Colonic mucosa (tissue), 4 donors: ENCODE measurements at regions of chr2 and their contacts with region 1.

Region 1: GRCh38 chr2:207625018-207625907 is at the start of gene METTL21A:
- DNase-seq: peak; percentile 94
- H3K4me3 ChIP-seq: peak within 1 kb of the TSS; percentile 93
- H3K27ac ChIP-seq: peak within 1 kb of the TSS; percentile 95
- H3K4me1 ChIP-seq: peaks cover 6% of the 10 kb centered on the region
- H3K27me3 ChIP-seq: no peaks in the 10 kb centered on the region
- CTCF ChIP-seq: peak; percentile 27
- total RNA-seq, gene METTL21A: 14.2 to 20.3 TPM

Region 2: GRCh38 chr2:207458582-207458981 is 166.7 kb before region 1 on chr2:
- intact Hi-C with region 1: no loop called
- DNase-seq: no peak
- H3K4me3 ChIP-seq: no peak overlapping the region
- H3K27ac ChIP-seq: no peak overlapping the region
- H3K4me1 ChIP-seq: no peaks in the 10 kb centered on the region
- H3K27me3 ChIP-seq: no peaks in the 10 kb centered on the region
- CTCF ChIP-seq: no peak

Region 3: GRCh38 chr2:207529330-207530159 is 95.7 kb before region 1 on chr2 and contains the start of gene CREB1:
- intact Hi-C with region 1: loop called (anchors 5 kb)
- DNase-seq: peak; percentile 99
- H3K4me3 ChIP-seq: peak within 1 kb of the TSS; percentile 76
- H3K27ac ChIP-seq: peak within 1 kb of the TSS; percentile 100
- H3K4me1 ChIP-seq: peaks cover 15% of the 10 kb centered on the region
- H3K27me3 ChIP-seq: no peaks in the 10 kb centered on the region
- CTCF ChIP-seq: no peak
- total RNA-seq, gene CREB1: 46.0 to 55.4 TPM

Region 4: GRCh38 chr2:207710814-207711740 is 85.8 kb after region 1 on chr2 and contains the start of gene CCNYL1:
- intact Hi-C with region 1: loop called (anchors 5 kb)
- DNase-seq: peak; percentile 98
- H3K4me3 ChIP-seq: peak within 1 kb of the TSS; percentile 94
- H3K27ac ChIP-seq: peak within 1 kb of the TSS; percentile 95
- H3K4me1 ChIP-seq: no peaks in the 10 kb centered on the region
- H3K27me3 ChIP-seq: no peaks in the 10 kb centered on the region
- CTCF ChIP-seq: no peak
- total RNA-seq, gene CCNYL1: 19.9 to 33.1 TPM

Region 5: DNA sequence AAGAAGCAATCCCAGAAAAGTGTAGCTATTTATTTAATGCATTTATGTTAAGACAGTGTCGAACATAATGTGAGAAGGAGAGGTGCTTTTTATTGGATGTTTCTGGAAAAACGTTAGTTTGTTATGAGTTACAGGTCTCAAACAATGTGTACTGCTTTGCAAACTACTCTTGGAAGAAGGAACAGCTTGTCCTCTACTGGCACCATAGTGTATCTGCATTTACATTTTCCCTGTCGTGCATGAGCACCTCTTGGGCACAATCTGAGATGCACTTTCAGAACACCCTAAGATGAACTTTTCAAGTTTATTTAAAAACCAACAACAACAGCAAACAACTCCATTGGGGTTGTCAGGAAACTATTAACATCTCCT is 109.0 kb after region 1 on chr2:
- intact Hi-C with region 1: loop called (anchors 5 kb)
- DNase-seq: no peak
- H3K4me3 ChIP-seq: no peak overlapping the region
- H3K27ac ChIP-seq: peak overlapping the region; percentile 24
- H3K4me1 ChIP-seq: no peaks in the 10 kb centered on the region
- H3K27me3 ChIP-seq: no peaks in the 10 kb centered on the region
- CTCF ChIP-seq: peak; percentile 40

Region 6: DNA sequence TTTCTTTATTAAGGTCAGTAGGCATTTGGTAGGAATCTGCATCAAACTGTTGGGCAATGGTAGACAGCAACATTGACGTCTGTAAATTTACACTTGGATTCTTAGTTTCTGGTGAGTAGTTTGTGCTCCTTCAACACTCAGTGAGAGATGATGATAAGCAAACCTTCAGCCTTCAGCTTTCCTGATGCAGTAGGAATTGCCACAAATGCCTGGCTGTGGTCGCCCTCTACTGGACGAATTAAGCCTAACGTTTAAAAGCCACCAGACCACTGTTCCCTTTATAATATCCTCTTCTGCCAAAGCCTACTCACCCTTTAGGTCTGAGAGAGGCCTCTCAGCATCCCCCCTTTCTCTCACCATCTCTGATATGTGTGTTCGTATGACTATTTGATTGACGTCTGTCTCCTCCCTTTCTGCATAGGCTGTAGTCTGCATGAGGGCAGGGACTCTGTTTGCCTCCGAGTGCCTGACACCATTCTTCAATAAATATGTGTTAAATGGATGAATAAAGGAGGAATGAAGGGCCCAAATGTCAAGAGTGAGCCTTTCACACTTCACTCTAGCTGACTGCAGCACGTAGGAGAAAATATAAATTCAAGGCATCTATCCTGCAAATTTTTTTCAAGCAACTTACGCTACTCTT is 447.1 kb after region 1 on chr2:
- intact Hi-C with region 1: loop called (anchors 10 kb)
- DNase-seq: peak; percentile 78
- H3K4me3 ChIP-seq: no peak overlapping the region
- H3K27ac ChIP-seq: no peak overlapping the region
- H3K4me1 ChIP-seq: no peaks in the 10 kb centered on the region
- H3K27me3 ChIP-seq: no peaks in the 10 kb centered on the region
- CTCF ChIP-seq: peak; percentile 65